Activated CD4-positive, alpha-beta memory T cell treated with anti-CD3 and anti-CD28 coated beads, Interleukin-2, amount 10 ng/mL, durations not matched to agents 7 days and 5 days (primary cell): ENCODE measurements at regions of chr9 and their contacts with region 1.

Region 1: DNA sequence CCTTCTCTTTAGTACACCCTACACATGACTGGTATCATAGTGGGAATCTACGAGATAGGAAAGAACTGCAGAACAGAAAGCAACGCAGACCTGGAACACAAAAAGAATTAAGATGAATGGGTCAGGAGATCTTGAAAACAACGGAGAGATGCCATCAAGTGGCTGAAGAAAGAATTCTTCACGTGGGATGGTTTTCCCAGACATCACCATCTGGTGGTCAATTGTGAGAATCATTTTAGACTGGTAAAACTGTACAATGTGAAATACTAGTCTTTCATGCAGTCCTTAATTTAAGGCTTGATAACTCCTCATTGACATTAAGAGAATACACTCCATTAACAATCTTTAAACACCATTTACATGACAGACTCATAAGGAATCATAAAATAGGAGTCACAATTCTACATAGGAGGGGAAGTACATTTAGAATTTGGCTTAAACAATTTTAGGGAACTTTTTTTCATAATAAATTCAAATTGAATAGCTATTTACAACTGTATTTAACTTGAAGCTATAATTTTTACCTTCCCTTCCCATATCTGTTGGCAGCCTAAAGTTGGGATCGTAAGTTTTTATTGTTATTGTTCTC is 128.4 kb upstream of the TRPM3 start:
- DNase-seq: no peak
- H3K4me3 Mint-ChIP-seq: no peak overlapping the region
- H3K27ac Mint-ChIP-seq: no peak overlapping the region
- H3K4me1 Mint-ChIP-seq: no peaks in the 10 kb centered on the region
- H3K27me3 Mint-ChIP-seq: peaks cover 4% of the 10 kb centered on the region

Region 2: DNA sequence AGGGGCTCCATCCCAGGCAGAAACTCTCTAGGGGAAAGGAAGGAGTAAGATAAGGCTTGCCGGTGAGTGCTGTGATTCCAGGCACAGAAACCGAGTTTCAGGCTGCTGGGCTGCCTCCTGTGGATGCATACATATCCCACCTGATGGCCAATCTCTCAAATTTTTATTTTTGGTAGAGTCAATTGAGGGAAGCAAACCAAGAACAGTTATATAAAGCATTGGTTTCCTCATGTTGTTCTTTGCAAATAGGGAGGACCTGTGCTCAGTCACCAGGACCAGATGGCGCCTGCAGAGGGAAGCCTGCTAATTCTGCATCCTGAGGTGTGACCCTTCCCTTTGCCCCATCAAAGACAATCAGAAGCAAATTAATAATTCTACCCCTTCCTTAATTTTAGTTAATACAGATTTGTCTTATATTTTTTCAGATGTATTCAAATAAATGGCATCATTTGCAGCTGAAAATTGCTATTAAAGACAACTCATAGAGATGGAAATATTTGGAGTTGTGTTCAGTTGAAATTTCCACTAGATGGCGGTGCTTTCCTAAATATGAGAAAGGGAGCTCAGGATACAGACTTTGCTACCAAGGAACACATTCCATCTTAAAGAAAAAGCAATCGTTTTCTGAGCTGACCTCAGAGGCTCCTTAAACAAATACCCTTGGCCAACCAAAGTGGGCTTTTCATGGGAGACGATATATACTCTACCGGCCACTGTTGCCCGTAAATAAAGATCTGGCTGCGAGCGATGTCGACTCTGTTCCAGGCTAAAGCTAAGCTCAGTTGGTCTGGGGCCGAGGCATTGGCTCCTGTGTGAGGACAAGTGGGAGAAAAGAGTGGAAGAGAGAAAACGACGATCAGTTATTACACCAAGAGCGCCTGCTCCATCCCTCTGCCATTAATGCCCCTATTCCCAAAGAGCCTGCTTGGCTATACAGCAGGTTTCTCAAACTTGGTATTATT is 609.7 kb before region 1 on chr9:
- CTCF ChIA-PET with region 1: interaction called, 15 read pairs
- POLR2A ChIA-PET with region 1: no interaction called
- DNase-seq: no peak
- H3K4me3 Mint-ChIP-seq: no peak overlapping the region
- H3K27ac Mint-ChIP-seq: no peak overlapping the region
- H3K4me1 Mint-ChIP-seq: no peaks in the 10 kb centered on the region
- H3K27me3 Mint-ChIP-seq: peaks cover 11% of the 10 kb centered on the region

Region 3: DNA sequence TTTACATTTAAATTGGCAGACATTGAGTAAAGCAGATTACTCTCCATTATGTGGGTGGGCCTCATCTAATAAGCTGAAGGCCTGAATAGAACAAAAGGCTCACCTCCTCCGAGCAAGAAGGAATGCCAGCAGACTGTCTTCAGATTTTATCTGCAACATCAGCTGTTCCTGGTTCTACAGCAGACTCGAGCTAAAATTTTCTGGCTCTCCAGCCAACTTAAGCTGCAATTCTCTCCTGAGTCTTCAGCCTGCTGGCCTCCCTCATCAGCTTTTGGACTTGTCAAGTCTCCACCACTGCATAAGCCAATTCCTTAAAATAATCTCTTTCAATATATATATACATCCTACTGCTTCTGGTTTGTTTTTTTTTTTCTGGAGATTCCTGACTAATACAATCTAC is 140.9 kb before region 1 on chr9:
- CTCF ChIA-PET with region 1: no interaction called
- POLR2A ChIA-PET with region 1: no interaction called
- DNase-seq: no peak
- H3K4me3 Mint-ChIP-seq: no peak overlapping the region
- H3K27ac Mint-ChIP-seq: no peak overlapping the region
- H3K4me1 Mint-ChIP-seq: no peaks in the 10 kb centered on the region
- H3K27me3 Mint-ChIP-seq: no peaks in the 10 kb centered on the region

Region 4: DNA sequence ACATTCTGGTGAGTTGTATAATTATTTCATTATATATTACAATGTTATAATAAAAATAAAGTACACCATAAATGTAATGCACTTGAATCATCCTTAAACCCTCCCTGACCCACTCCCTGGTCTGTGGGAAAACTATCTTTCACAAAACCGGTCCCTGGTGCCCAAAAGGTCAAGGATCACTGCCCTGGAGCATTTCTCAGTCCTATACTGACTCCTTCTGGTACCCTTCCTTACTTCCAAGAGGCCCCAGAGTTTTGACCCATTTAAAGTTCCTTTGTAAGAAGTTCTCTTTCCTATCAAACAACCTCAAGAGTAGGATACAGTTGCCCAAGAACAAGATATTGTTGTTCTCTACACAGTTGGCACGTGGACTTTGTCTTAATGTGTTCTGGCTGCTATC is 39.5 kb before region 1 on chr9:
- CTCF ChIA-PET with region 1: no interaction called
- POLR2A ChIA-PET with region 1: no interaction called
- DNase-seq: no peak
- H3K4me3 Mint-ChIP-seq: no peak overlapping the region
- H3K27ac Mint-ChIP-seq: no peak overlapping the region
- H3K4me1 Mint-ChIP-seq: no peaks in the 10 kb centered on the region
- H3K27me3 Mint-ChIP-seq: peaks cover 2% of the 10 kb centered on the region